Stomach (tissue), 19 donors: ENCODE measurements at regions of chr18 and their contacts with region 1.

Region 1: GRCh38 chr18:74714791-74715190 is 117.1 kb downstream of the ZNF407 start:
- DNase-seq: no peak
- H3K4me3 ChIP-seq: no peak overlapping the region
- H3K27ac ChIP-seq: no peak overlapping the region
- H3K4me1 ChIP-seq: no peaks in the 10 kb centered on the region
- H3K27me3 ChIP-seq: no peaks in the 10 kb centered on the region
- CTCF ChIP-seq: no peak
- EP300 ChIP-seq: no peak
- POLR2A ChIP-seq: no peak

Region 2: DNA sequence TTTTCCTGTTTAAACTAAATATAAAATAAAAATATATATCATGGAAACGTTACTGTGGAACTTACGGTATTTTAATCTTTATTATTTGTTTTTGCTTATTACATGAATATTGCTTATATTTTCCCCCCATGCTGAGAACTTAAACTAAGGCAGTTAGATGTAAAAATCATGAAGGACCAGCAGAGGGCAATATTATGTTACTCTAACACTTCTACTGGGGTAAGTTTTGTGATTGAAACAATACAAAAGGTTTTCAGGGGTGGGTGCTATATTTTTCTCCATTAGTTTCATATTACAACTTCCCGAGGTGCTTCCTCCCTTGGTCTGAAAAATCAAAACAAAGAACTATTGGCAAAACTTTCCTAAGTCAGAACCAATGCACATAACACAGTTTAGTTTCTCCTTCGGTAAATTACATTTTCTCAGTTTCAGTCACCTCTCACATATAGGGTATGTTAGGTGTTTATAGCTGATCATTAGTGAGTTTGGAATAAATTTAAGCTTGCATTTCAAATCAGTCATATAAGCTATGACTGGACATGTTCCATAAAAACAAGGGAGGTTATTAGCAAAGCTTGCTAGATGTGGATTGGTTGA is 62.3 kb before region 1 on chr18:
- intact Hi-C with region 1: loop called (anchors 10 kb)
- DNase-seq: peak in 1 of 2 donors; percentile 65
- H3K4me3 ChIP-seq: no peak overlapping the region
- H3K27ac ChIP-seq: no peak overlapping the region
- H3K4me1 ChIP-seq: peaks cover 0 to 2% (median under 1%) of the 10 kb centered on the region in 4 donors
- H3K27me3 ChIP-seq: no peaks in the 10 kb centered on the region
- CTCF ChIP-seq: peak in 5 of 7 experiments; percentile 26 to 49 (median 36)
- EP300 ChIP-seq: no peak
- POLR2A ChIP-seq: no peak